ENCODE measurements at regions of chr2 and their contacts with region 1.

Region 1: DNA sequence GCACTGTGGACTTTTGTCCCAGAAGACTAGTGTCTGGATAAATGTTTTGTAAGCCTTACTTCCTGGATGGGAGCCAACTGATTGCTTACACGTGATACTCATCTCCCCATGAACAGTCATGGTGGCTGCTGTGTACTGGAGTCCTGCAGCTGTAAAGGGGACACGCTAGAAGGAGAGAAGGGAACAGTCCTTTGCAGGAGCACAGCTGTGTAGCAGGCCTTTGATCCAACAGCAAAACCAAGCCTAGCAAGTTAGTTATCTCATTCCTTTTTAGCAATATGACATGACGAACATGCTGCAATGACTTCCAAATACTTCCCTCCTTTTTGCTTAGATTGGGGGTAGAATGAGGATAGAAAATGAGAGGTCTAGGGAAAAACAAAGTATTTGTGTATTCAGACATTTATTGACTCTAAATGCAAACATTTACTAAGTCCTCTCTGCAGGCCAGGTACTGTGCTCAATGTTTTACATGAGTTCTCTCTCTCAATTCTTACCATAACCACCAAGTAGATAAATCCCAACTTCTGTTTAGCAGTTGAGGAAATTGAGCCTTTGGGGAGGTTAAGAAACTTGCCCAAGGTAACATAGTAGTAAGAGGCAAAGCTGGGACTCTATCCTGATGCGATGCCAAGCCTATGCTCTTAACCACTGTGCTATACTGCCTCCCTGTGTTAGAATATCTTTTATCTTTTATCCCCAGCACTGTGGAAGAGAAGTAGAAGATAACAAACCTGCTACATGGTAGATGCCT is 55.4 kb upstream of the CD28 start:
- DNase-seq: no peak
- ATAC-seq: peak; percentile 92
- H3K4me3 ChIP-seq: no peak overlapping the region
- H3K27ac ChIP-seq: peak overlapping the region; percentile 53
- H3K4me1 ChIP-seq: peaks cover 51% of the 10 kb centered on the region
- H3K27me3 ChIP-seq: no peaks in the 10 kb centered on the region
- CTCF ChIP-seq: peak; percentile 56

Region 2: DNA sequence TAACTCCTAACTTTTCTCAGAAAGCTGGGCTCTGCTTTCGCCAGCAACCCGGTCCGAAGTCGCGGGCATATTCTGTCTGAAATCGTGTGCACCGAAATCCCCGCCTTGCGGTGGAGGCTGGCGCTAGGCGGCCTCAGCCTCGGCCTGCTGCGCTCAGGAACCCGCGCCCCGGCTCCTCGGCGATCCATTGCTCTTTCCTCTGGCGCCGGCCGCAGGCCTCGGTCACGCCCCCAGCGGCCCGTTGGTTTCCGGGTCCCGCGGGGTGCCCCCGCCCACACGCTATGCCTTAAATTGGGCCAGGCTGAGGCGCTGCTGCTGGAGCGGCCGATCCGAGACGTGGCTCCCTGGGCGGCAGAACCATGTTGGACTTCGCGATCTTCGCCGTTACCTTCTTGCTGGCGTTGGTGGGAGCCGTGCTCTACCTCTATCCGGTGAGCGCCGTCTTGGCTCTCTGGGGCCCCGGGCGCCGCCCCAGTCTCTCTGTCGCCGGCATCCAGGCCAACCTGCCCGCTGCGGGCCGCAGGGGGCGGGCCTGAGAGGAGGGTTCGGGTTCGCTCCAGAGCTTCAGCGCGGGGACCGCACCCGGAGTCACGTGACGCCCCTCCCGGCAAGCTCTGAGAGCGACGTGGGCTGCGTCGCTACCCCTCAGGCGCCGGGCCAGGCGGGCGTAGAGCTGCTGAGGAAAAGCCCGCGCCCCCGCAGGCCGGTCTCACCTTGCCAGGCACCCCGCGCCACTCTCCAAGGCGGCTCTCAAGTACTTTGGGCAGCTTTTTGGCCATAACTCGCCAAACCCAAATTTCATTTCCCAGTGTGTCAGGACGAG is 412.1 kb before region 1 on chr2 and contains the start of gene CYP20A1:
- intact Hi-C with region 1: loop called (anchors 10 kb)
- DNase-seq: peak; percentile 99
- ATAC-seq: peak; percentile 98
- H3K4me3 ChIP-seq: peak within 1 kb of the TSS; percentile 82
- H3K27ac ChIP-seq: peak within 1 kb of the TSS; percentile 98
- H3K4me1 ChIP-seq: peaks cover 12% of the 10 kb centered on the region
- H3K27me3 ChIP-seq: no peaks in the 10 kb centered on the region
- CTCF ChIP-seq: peak; percentile 31
- total RNA-seq, gene CYP20A1: 35.0 TPM

Measured in upper lobe of right lung (tissue), 1 donor.